A549 (cell line): ENCODE measurements at regions of chr11 and their contacts with region 1.

Region 1: GRCh38 chr11:44133335-44133946 is 38.0 kb downstream of the EXT2 start:
- DNase-seq: peak; percentile 23 to 47
- ATAC-seq: peak; percentile 72 to 79; a peak in 5 of 6 replicates
- H3K4me3 ChIP-seq: no peak overlapping the region
- H3K27ac ChIP-seq: no peak overlapping the region
- H3K4me1 ChIP-seq: 0 out of 3 replicates have a peak, but pooled peaks cover 4% of the 10 kb centered on the region
- CTCF ChIP-seq: peak; percentile 80
- EP300 ChIP-seq: no peak
- POLR2A ChIP-seq: no peak
- RAD21 ChIP-seq: peak; percentile 72 to 75

Region 2: DNA sequence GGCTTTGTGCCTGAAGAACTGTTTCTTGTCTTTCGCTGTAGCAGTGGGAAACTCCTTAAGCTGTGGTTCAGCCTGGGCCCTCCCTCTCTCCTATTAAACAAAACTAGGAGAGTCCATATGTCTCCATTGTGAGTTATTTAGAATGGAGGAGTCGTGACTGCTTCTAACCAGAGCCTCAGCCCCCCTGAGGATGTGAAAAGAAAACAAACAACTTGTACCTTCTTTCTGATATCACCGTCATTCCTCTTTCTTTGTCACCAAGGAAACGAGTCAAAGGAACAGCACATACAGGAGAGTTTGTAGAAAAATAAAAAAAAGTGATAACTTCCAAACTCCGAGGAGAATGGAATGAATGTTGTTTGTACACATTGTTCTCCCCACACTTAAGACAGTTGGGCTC is 49.5 kb before region 1 on chr11:
- CTCF ChIA-PET with region 1: interaction called, 10 read pairs
- POLR2A ChIA-PET with region 1: no interaction called
- DNase-seq: no peak
- ATAC-seq: no peak
- H3K4me3 ChIP-seq: no peak overlapping the region
- H3K27ac ChIP-seq: no peak overlapping the region
- H3K4me1 ChIP-seq: no peaks in the 10 kb centered on the region
- CTCF ChIP-seq: no peak
- EP300 ChIP-seq: no peak
- POLR2A ChIP-seq: no peak
- RAD21 ChIP-seq: no peak

Region 3: GRCh38 chr11:44120169-44120568 is 13.3 kb before region 1 on chr11:
- CTCF ChIA-PET with region 1: interaction called, 16 read pairs
- POLR2A ChIA-PET with region 1: no interaction called
- DNase-seq: peak; percentile 18 to 39
- ATAC-seq: peak; percentile 76 to 86; a peak in 4 of 6 replicates
- H3K4me3 ChIP-seq: no peak overlapping the region
- H3K27ac ChIP-seq: no peak overlapping the region
- H3K4me1 ChIP-seq: no peaks in the 10 kb centered on the region
- CTCF ChIP-seq: no peak
- EP300 ChIP-seq: no peak
- POLR2A ChIP-seq: no peak
- RAD21 ChIP-seq: 0 out of 5 replicates have a peak, but pooled peaks of 1 of the 2 experiments have one; percentile 19

Region 4: DNA sequence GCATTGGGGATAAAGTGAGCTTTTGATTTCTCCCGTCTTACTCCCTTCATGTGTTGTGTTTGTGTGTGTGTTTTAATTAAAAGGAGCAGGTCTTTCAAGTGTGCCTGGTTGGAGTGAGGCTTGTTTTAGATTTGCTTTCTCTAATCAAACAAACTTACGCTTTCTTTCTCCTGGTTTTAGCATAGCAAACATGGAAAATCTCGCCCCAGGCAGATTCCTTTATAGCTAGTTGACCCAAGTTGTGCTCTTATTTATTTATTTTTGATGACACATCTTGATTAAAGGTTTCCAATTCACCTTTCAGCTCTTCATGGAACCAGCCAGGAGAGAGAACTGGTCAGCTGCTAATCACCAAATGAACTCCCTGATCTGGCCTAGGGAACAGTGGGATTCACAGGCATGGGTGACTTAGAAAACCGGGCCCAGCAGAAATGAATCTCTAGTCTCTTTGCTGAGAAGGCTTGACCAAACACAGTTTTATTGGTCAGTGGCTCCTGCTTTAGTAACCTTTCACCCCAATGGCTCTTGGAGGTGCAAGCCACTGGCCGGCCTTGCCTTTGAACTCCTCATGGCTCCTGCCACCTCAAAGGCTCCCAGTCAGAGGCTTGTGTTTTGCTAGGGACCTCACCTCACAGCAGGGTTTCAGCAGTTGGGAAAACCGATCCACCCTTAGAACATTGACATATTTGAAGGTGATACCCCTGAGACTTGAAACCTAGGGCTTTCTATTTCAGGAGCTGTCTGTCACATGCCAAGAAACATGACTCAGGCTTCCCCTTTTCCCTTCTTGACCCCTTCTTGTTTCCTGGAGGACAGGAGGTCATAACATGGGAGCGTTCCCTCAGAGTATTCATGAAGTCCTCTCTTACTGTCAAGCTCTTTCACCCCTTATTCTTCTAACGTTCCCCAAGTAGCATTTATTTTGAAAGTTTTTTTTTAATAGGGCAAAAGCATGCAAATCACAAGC is 10.8 kb after region 1 on chr11:
- CTCF ChIA-PET with region 1: interaction called, 21 read pairs
- POLR2A ChIA-PET with region 1: no interaction called
- DNase-seq: no peak
- ATAC-seq: no peak
- H3K4me3 ChIP-seq: no peak overlapping the region
- H3K27ac ChIP-seq: no peak overlapping the region
- H3K4me1 ChIP-seq: peaks cover 14% of the 10 kb centered on the region
- CTCF ChIP-seq: no peak
- EP300 ChIP-seq: no peak
- POLR2A ChIP-seq: no peak
- RAD21 ChIP-seq: no peak

Region 5: GRCh38 chr11:44530413-44531115 is 397.1 kb after region 1 on chr11:
- CTCF ChIA-PET with region 1: interaction called, 22 read pairs
- POLR2A ChIA-PET with region 1: no interaction called
- DNase-seq: no peak
- ATAC-seq: peak in 1 of 2 experiments; percentile 61; a peak in 3 of 6 replicates
- H3K4me3 ChIP-seq: no peak overlapping the region
- H3K27ac ChIP-seq: peak overlapping the region in 1 of 2 experiments; percentile 43; a peak in 2 of 6 replicates
- H3K4me1 ChIP-seq: peaks cover 17% of the 10 kb centered on the region; the same call in 2 of the 3 replicates
- CTCF ChIP-seq: no peak
- EP300 ChIP-seq: no peak
- POLR2A ChIP-seq: no peak
- RAD21 ChIP-seq: no peak

Region 6: GRCh38 chr11:44538375-44539054 is 405.1 kb after region 1 on chr11:
- CTCF ChIA-PET with region 1: interaction called, 25 read pairs
- POLR2A ChIA-PET with region 1: no interaction called
- DNase-seq: peak; percentile 69 to 91
- ATAC-seq: peak; percentile 88 to 99
- H3K4me3 ChIP-seq: no peak overlapping the region
- H3K27ac ChIP-seq: peak overlapping the region in 1 of 2 experiments; percentile 69; a peak in 3 of 6 replicates
- H3K4me1 ChIP-seq: no peaks in the 10 kb centered on the region
- CTCF ChIP-seq: peak; percentile 88
- EP300 ChIP-seq: no peak
- POLR2A ChIP-seq: no peak
- RAD21 ChIP-seq: peak; percentile 97